Mammary epithelial cell (primary cell): ENCODE measurements at regions of chrX and their contacts with region 1.

Region 1: DNA sequence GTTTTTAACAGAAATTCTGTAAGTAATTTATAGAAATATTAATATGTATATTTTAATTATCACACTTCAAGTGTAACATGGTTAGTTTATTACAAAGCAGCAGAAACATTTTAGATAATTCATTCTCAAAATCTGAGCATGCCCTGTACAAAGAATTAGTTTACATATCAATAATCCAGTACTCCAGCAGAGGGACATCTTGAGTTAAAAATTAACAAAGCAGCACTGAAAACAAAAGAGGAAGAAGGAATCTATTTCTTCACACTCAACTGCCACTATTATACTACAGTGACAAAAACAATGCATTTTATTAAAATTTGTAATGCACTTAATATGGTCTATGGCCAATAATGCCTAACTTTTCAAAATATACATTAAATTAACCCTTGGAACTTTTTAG is 179.1 kb upstream of the KLHL4 start:
- DNase-seq: peak; percentile 15
- H3K4me3 ChIP-seq: no peak overlapping the region
- H3K27ac ChIP-seq: no peak overlapping the region
- H3K4me1 ChIP-seq: no peaks in the 10 kb centered on the region
- H3K27me3 ChIP-seq: peaks cover 2% of the 10 kb centered on the region
- CTCF ChIP-seq: peak; percentile 20 to 49

Region 2: DNA sequence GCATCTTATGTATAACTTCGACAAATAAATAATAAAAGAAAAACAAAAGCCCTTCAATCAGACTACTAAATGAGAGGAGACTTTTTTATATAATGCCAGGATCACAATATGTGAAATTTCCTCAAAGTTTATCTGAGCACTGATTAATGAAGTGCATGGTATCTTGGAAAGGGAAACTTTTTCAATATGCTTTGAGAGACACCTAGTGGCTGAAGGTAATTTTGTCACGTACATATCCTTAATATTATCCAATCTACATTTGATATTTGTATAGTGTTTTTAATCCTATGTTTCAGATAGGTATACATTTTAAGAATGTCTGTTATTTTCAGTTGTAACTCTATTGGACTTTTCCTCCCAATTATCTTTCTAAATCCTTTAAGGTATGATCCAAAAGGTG is 325.9 kb after region 1 on chrX:
- CTCF ChIA-PET with region 1: no interaction called
- dilution Hi-C with region 1: no loop called
- in situ Hi-C with region 1: loop called in 1 of 2 experiments (anchors 10 kb)
- intact Hi-C with region 1: loop called (anchors 1 kb)
- DNase-seq: peak; percentile 18
- H3K4me3 ChIP-seq: no peak overlapping the region
- H3K27ac ChIP-seq: no peak overlapping the region
- H3K4me1 ChIP-seq: no peaks in the 10 kb centered on the region
- H3K27me3 ChIP-seq: no peaks in the 10 kb centered on the region
- CTCF ChIP-seq: peak; percentile 46 to 59